Ascending aorta (tissue), 2 donors: ENCODE measurements at regions of chr2 and their contacts with region 1.

Region 1: DNA sequence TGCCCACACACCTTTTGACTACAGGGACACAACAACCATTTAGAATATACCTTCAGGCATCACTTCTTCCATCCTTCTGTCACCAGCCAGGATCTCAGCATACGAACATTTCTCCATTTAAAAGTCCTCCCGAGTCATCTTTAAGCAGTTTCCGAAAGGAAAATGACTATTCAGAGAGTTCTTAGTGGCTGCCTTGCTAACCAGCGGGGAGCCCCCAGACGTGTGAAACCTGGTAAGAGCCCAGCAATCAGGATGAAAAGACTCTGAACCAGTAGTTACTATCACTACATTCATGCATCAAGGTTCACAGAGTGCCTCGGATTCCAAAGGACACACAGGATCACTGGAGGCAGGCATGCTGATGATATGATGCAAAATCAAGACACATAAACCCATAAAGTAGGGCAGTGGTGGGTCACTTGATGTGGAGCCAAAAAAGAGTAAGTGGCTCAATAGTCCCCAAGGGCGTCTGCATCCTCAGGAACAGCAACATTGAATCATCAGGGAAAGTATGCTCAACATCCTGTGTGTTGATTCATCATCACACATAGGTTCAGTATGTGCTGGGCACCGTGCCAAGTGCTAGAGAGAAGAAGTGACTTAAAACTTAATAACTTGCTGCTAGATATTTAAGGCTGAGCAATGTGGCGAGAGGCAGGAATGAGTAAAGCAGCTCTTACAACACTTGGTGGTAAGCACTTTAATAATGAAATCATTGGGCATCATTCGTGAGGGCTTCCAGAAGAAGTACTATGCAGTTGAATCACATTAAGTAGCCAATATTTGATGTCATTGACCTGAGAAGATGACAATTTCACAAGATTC is 4.4 kb downstream of the CCL20 start:
- DNase-seq: peak; percentile 94 to 100
- H3K4me3 ChIP-seq: peak overlapping the region; percentile 11 to 20
- H3K27ac ChIP-seq: peak overlapping the region; percentile 84 to 85
- H3K4me1 ChIP-seq: peaks cover 9 to 26% of the 10 kb centered on the region in 2 donors
- H3K27me3 ChIP-seq: no peaks in the 10 kb centered on the region
- CTCF ChIP-seq: no peak

Region 2: DNA sequence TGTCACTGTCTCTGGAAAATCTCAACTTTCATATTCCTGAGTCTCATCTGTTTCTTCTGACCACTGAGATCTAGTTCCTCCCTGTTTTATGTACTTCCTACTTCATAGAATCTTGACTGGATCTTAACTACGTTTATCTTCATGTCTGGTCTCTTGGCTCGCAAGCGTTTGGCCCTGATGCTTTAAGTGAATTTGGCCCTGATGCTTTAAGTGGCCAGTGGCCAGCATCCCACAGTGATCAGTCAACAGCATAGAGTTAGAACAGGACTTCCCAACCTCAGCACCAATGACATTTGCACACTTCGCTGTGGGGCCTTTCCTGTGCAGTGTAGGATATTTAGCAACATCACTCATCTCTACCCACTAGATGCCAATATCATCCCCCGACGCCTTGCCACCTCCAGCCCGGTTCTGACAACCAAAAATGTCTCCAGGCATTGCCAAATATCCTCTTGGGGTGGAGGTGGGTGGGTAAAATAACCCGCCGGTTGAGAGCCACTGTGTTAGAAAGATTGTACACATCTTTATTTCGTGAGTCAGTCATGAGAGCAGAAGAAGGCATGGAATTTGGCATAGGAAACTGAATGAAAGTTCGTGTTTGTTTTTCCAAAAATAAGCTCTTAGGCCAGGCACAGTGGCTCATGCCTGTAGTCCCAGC is 451.2 kb before region 1 on chr2:
- intact Hi-C with region 1: loop called (anchors 5 kb)
- DNase-seq: peak in 1 of 2 donors; percentile 83
- H3K4me3 ChIP-seq: no peak overlapping the region
- H3K27ac ChIP-seq: peak overlapping the region; percentile 51 to 85
- H3K4me1 ChIP-seq: peaks cover 0 to 34% of the 10 kb centered on the region in 2 donors
- H3K27me3 ChIP-seq: no peaks in the 10 kb centered on the region
- CTCF ChIP-seq: no peak

Region 3: GRCh38 chr2:227717687-227718567 is 100.1 kb before region 1 on chr2 and contains the start of gene SLC19A3:
- intact Hi-C with region 1: loop called (anchors 5 kb)
- DNase-seq: peak; percentile 44 to 95
- H3K4me3 ChIP-seq: peak within 1 kb of the TSS; percentile 54 to 60
- H3K27ac ChIP-seq: peak within 1 kb of the TSS; percentile 59 to 79
- H3K4me1 ChIP-seq: peaks cover 0 to 7% of the 10 kb centered on the region in 2 donors
- H3K27me3 ChIP-seq: no peaks in the 10 kb centered on the region
- CTCF ChIP-seq: no peak
- total RNA-seq, gene SLC19A3: 16.5 TPM

Region 4: DNA sequence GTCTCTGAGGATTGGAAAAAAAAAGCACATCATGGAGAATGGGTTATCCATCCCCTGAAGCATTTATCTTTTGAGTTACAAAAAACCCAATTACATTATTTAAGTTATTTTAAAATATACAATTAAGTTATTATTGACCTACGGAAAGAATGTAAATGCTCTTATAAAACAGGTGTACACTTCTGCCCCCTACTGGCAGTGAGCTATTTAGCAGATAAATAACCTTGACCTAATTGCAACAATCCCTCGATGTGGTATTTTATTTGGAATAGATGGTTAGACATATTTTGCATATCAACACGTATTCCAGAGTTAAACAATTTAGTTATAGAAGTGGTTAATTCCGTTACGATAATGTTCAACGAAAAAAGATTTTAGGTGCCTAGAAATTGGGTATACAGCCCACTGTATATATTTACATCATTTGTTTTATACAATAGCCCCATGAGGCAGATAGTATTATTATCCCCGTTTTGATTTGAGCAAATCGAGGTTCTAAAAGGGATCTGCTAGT is 44.2 kb after region 1 on chr2:
- intact Hi-C with region 1: loop called (anchors 2 kb)
- DNase-seq: no peak
- H3K4me3 ChIP-seq: no peak overlapping the region
- H3K27ac ChIP-seq: peak overlapping the region; percentile 78 to 80
- H3K4me1 ChIP-seq: peaks cover 13 to 37% of the 10 kb centered on the region in 2 donors
- H3K27me3 ChIP-seq: no peaks in the 10 kb centered on the region
- CTCF ChIP-seq: peak in 2 of 3 experiments; percentile 28 to 35

Region 5: DNA sequence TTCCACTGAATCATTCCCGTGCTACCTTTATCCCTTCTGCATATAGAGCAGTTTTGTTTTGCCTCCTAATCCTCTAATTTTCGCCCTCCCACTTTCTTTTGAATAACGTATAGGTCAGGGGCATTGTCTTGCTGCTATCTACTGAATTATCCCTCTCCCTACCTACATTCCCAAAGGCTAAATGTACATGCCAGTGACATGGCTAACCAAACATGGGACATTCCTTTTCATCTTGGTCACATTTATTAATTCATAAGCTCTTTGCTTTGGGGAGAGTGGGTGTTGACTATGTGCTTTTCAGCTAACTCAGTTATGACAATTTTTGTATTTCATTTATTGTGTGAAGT is 58.4 kb after region 1 on chr2:
- intact Hi-C with region 1: loop called (anchors 1 kb)
- DNase-seq: no peak
- H3K4me3 ChIP-seq: no peak overlapping the region
- H3K27ac ChIP-seq: peak overlapping the region; percentile 73 to 81
- H3K4me1 ChIP-seq: peaks cover 2 to 33% of the 10 kb centered on the region in 2 donors
- H3K27me3 ChIP-seq: no peaks in the 10 kb centered on the region
- CTCF ChIP-seq: no peak

Region 6: GRCh38 chr2:229257985-229258384 is 1439.9 kb after region 1 on chr2:
- intact Hi-C with region 1: loop called (anchors 10 kb)
- DNase-seq: peak in 1 of 2 donors; percentile 85
- H3K4me3 ChIP-seq: no peak overlapping the region
- H3K27ac ChIP-seq: peak overlapping the region; percentile 63 to 78
- H3K4me1 ChIP-seq: peaks cover 5 to 44% of the 10 kb centered on the region in 2 donors
- H3K27me3 ChIP-seq: no peaks in the 10 kb centered on the region
- CTCF ChIP-seq: no peak